Testis (tissue), 5 donors: ENCODE measurements at regions of chr20 and their contacts with region 1.

Region 1: DNA sequence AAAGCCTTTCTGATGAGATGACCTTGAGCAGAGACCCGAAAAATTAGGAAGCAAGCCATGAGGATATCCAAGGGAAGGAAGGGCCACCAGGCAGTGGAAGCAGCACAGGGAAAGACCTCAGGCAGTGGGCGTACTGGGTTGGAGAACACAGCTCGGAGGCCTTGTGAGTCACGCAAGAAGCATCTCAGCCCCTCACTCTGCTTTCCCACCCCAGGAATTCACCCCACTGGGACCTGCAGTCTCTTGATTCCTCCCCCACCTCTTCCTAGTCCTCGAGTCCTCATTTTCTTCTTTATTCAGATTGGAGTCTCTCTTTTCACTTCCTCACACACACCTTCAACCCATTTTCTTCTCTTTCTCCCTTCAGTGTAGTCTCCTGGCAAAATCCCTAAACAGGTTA is 27.0 kb downstream of the RPRD1B start:
- DNase-seq: no peak
- H3K4me3 ChIP-seq: no peak overlapping the region
- H3K27ac ChIP-seq: no peak overlapping the region
- H3K4me1 ChIP-seq: no peaks in the 10 kb centered on the region
- H3K27me3 ChIP-seq: no peaks in the 10 kb centered on the region
- CTCF ChIP-seq: no peak
- POLR2A ChIP-seq: no peak

Region 2: GRCh38 chr20:38165089-38165989 is 104.8 kb after region 1 on chr20 and contains the start of gene TGM2:
- intact Hi-C with region 1: loop called (anchors 10 kb)
- DNase-seq: peak; percentile 68
- H3K4me3 ChIP-seq: peak within 1 kb of the TSS; percentile 31 to 47
- H3K27ac ChIP-seq: peak within 1 kb of the TSS in 1 of 2 donors; percentile 39
- H3K4me1 ChIP-seq: peaks cover 7% of the 10 kb centered on the region
- H3K27me3 ChIP-seq: no peaks in the 10 kb centered on the region
- CTCF ChIP-seq: peak; percentile 67 to 82 (median 81)
- POLR2A ChIP-seq: no peak
- total RNA-seq, gene TGM2: 3.2 to 8.5 TPM

Region 3: GRCh38 chr20:38221119-38221589 is 160.6 kb after region 1 on chr20:
- intact Hi-C with region 1: loop called (anchors 10 kb)
- DNase-seq: peak; percentile 72
- H3K4me3 ChIP-seq: no peak overlapping the region
- H3K27ac ChIP-seq: no peak overlapping the region
- H3K4me1 ChIP-seq: no peaks in the 10 kb centered on the region
- H3K27me3 ChIP-seq: no peaks in the 10 kb centered on the region
- CTCF ChIP-seq: peak; percentile 74 to 88 (median 79)
- POLR2A ChIP-seq: no peak